ENCODE measurements at regions of chr12 and their contacts with region 1.

Region 1: DNA sequence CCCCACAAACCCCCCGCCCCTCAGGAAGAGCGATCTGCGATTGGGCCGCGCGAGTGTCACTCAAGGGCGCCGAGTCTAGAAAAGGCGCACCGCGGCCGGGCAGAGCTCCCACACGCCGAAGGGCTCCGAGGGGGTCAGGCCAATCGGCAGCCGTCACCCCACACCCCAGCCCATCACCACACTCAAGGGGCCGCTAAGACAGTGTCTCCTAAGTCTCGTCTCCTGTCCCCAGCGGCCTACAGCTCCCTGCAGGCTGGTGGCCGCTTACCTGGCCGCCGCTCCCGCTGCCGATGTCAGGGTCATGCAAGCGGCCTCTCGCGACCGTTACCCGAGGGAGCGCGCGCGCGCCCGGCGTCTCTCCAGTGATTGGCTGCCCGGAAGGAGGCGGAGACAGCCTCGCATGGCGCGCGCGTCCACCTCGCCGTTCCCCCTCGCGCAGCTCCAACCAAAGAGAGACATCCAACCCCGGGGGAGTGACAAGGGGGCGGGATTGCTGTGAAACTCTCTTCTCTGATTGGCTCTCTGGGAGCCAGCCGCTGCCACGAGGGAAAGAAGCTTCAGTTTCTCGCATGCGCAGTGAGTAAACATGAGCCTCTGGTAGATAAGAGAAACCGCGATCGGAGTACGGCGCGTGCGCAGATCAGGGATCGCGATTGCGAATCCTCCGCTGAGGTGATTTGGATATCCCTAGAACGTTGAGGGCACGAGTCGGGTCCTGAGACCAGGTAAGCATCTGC is at the starts of genes MPHOSPH9 and MTRFR:
- DNase-seq: peak; percentile 99
- H3K4me3 ChIP-seq: peak within 1 kb of the TSS; percentile 99
- H3K27ac ChIP-seq: peak within 1 kb of the TSS; percentile 69
- H3K4me1 ChIP-seq: peaks cover 10% of the 10 kb centered on the region; the same call in 1 of the 2 replicates
- H3K27me3 ChIP-seq: no peaks in the 10 kb centered on the region
- total RNA-seq, gene MPHOSPH9: 26.6 and 51.6 TPM in 2 replicates
- total RNA-seq, gene MTRFR: 3.7 and 7.5 TPM in 2 replicates

Region 2: GRCh38 chr12:122860346-122861090 is 372.5 kb before region 1 on chr12:
- in situ Hi-C with region 1: loop called (anchors 25 kb)
- DNase-seq: peak; percentile 86
- H3K4me3 ChIP-seq: no peak overlapping the region
- H3K27ac ChIP-seq: no peak overlapping the region
- H3K4me1 ChIP-seq: no peaks in the 10 kb centered on the region
- H3K27me3 ChIP-seq: no peaks in the 10 kb centered on the region

Measured in GM23248 (cell line).